ENCODE measurements at regions of chr10 and their contacts with region 1.

Region 1: DNA sequence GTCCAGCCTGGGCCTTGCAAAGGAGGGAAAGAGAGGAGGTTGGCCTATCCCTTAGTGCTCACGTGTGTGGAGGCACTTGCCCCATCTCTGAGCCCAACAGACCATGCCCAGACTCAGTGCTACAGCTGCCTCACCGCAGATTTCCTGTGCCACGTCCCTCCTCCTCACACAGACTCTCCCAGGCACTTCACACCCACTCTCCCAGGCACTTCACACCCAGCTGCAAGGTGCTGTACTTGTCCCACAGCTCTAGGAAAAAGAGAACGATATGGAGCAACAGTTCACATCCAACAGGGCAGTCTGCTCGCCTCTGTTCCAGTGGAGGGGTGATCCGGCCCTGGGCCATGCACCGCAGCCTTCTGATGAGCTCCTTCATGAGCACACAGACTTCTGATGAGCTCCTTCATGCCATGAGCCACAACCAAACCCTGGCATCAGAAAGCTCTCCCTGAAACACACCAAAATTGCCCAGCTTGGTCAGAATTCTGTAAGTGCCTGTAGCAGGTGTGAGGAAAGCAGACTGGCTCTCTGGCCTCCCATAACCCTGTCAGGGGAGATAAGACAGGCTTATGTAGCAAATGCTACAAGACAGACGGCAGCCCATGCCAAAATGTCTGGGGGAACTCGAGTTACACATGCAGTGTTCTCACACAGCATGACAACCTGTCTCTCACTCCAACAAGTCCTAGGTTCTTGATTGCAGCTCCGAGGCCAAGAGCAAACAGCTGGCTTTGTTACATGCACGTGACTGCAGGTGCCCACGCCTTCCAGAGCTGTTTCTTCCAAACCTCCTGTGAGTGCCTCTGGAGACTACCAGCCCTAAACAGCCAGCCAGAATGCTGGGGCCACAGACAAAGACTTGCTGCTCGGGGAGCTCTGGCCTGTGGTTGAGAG is 348.5 kb downstream of the GRID1 start:
- DNase-seq: no peak
- H3K4me3 ChIP-seq: no peak overlapping the region
- H3K27ac ChIP-seq: no peak overlapping the region
- H3K4me1 ChIP-seq: no peaks in the 10 kb centered on the region; a peak in 1 of 7 replicates
- H3K27me3 ChIP-seq: no peaks in the 10 kb centered on the region
- CTCF ChIP-seq: no peak
- EP300 ChIP-seq: no peak
- POLR2A ChIP-seq: no peak
- RAD21 ChIP-seq: no peak

Region 2: GRCh38 chr10:85967594-85967993 is 50.5 kb before region 1 on chr10:
- CTCF ChIA-PET with region 1: no interaction called
- POLR2A ChIA-PET with region 1: no interaction called
- DNase-seq: no peak
- H3K4me3 ChIP-seq: no peak overlapping the region
- H3K27ac ChIP-seq: no peak overlapping the region
- H3K4me1 ChIP-seq: no peaks in the 10 kb centered on the region
- H3K27me3 ChIP-seq: no peaks in the 10 kb centered on the region
- CTCF ChIP-seq: no peak
- EP300 ChIP-seq: no peak
- POLR2A ChIP-seq: no peak
- RAD21 ChIP-seq: no peak

Region 3: DNA sequence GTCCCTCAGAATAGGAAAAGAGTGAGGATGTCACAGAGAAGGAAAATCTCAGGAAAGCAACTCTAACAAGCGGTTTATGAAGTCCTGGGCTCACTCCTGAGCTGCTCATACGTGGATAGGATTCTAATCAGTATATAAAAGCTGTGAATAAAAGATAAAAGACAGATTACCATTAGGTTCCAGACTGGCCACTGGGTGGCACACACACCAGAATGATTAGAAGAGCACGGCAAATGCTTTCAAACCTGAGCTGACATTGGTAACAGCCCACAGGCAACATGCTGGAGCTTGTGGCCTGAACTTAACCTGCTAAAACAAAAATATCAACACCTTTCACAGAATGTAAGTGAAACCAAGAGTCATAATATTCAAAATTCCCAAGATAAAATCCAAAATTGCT is 22.3 kb before region 1 on chr10:
- CTCF ChIA-PET with region 1: interaction called, 11 read pairs
- POLR2A ChIA-PET with region 1: no interaction called
- DNase-seq: no peak
- H3K4me3 ChIP-seq: no peak overlapping the region
- H3K27ac ChIP-seq: no peak overlapping the region
- H3K4me1 ChIP-seq: no peaks in the 10 kb centered on the region
- H3K27me3 ChIP-seq: peaks cover 0 to 2% (median 0%) of the 10 kb centered on the region in 4 experiments; a peak in 1 of 7 replicates
- CTCF ChIP-seq: peak; percentile 6 to 63 (median 57)
- EP300 ChIP-seq: no peak
- POLR2A ChIP-seq: no peak
- RAD21 ChIP-seq: peak; percentile 52 to 59

Region 4: GRCh38 chr10:86046845-86047460 is 28.9 kb after region 1 on chr10:
- CTCF ChIA-PET with region 1: no interaction called
- POLR2A ChIA-PET with region 1: no interaction called
- DNase-seq: no peak
- H3K4me3 ChIP-seq: no peak overlapping the region
- H3K27ac ChIP-seq: no peak overlapping the region
- H3K4me1 ChIP-seq: no peaks in the 10 kb centered on the region
- H3K27me3 ChIP-seq: no peaks in the 10 kb centered on the region
- CTCF ChIP-seq: no peak
- EP300 ChIP-seq: no peak
- POLR2A ChIP-seq: no peak
- RAD21 ChIP-seq: no peak

Region 5: GRCh38 chr10:86061278-86062197 is 43.5 kb after region 1 on chr10:
- CTCF ChIA-PET with region 1: no interaction called
- POLR2A ChIA-PET with region 1: no interaction called
- DNase-seq: no peak
- H3K4me3 ChIP-seq: no peak overlapping the region
- H3K27ac ChIP-seq: no peak overlapping the region
- H3K4me1 ChIP-seq: no peaks in the 10 kb centered on the region
- H3K27me3 ChIP-seq: no peaks in the 10 kb centered on the region
- CTCF ChIP-seq: no peak
- EP300 ChIP-seq: no peak
- POLR2A ChIP-seq: no peak
- RAD21 ChIP-seq: peak in 1 of 2 experiments; percentile 24; a peak in 1 of 4 replicates

Region 6: DNA sequence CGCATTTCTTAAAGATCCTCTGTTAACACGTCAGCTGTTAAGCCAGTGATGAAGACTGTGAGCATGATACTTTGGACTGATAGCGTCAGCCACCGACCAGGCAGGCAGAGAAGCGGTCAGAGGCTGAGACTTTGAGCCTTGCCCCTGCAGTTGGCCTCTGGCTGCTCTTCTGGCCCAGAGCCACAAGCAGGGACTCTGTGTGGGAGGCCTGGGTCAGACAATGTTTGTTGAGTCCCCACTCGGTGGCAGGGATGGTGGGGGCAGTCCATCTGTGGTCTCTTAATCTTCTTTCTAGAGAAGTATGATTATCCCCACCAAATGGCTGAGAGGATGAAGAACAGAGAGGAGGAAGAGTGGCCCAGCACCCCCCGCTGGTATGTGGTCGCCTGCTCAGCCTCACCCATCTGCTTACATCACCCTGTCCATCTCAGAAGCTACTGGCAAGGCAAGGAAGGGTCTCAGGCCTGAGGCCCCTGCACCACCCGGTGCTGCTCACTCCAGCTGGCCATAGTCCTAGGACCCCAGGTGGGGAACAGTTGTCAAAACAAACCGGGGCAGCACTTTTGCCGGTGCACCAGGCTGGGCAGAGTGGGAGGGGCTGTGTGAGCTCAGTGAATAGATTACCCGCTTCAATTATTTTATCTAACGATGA is 145.6 kb after region 1 on chr10:
- CTCF ChIA-PET with region 1: no interaction called
- POLR2A ChIA-PET with region 1: no interaction called
- DNase-seq: no peak
- H3K4me3 ChIP-seq: no peak overlapping the region
- H3K27ac ChIP-seq: no peak overlapping the region
- H3K4me1 ChIP-seq: no peaks in the 10 kb centered on the region
- H3K27me3 ChIP-seq: no peaks in the 10 kb centered on the region
- CTCF ChIP-seq: no peak
- EP300 ChIP-seq: no peak
- POLR2A ChIP-seq: no peak
- RAD21 ChIP-seq: no peak